HEK293 (cell line): ENCODE measurements at regions of chr2 and their contacts with region 1.

Region 1: DNA sequence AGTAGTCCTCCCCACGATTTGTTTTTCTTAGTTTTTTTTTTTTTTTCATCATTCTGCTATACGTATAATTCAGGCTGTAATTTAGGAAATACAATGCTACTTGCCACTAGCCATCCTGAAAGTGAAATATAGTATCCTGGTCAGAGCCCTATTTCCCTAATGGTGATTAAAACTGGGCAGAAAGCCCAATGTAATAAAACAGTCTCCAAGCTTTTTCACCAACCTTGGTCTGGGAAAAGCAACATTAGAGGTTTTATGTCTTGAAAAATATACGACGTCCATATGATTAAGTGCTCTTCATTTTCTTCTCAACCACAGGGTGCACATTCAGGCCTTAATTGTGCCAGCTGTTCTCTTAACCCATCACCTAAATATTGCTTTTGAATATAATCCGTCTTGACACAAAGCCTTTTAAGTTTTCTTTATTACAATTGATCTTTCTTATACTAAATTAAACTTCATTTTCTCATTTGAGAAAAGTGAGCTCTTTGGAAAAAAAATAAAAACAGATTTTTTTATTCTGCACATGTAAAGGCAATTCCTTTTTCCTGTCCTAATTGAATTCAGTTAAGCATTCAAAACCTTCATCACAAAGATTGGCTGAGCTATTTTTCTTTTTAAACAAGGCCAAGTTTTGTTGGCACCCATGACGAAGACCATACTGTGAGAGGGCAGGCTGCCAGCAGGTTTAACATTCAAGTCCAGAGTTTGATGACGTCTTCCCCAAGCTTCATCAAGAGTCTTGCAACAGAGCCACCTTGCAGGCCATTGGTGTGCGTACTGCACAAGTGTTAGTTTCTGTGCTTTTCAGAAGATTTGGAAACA is 52.7 kb downstream of the MAP2 start:
- H3K4me3 ChIP-seq: no peak overlapping the region
- H3K27ac ChIP-seq: peak overlapping the region; percentile 90
- H3K4me1 ChIP-seq: peaks cover 53% of the 10 kb centered on the region
- CTCF ChIP-seq: no peak

Region 2: GRCh38 chr2:209495855-209496585 is 19.4 kb after region 1 on chr2:
- CTCF ChIA-PET with region 1: interaction called, 5 read pairs
- POLR2A ChIA-PET with region 1: interaction called, 23 read pairs
- H3K4me3 ChIP-seq: no peak overlapping the region
- H3K27ac ChIP-seq: peak overlapping the region; percentile 88
- H3K4me1 ChIP-seq: peaks cover 8% of the 10 kb centered on the region
- CTCF ChIP-seq: no peak